Caco-2 (cell line): ENCODE measurements at regions of chr12 and their contacts with region 1.

Region 1: DNA sequence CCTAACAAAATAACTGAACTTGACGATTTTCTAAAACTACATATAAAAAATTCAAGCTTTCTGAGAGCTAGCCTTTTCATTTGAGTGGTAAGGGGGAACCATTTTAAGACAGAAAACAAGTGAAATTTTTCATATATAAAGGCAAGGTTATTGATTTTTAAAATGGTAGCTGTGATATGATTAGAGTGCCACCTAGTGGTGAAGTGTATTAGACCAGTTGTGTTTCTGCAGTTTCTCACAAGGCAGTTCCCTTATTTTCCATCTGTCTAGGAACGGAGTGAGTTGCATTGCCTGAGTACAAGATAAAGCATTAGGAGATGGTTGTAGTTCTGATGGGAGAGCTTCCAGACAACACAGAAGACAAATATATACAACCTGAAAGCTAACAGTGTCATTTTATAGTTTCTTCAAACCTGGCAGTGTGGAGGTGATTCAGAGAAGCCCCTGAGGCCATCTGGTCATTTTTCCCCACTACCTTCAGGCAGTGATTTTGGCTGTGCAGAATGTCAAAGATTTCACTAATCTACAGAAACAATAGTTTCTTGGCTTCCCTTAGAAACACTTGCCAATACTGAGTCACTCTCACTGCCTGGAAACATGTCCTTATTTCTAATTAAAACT is 180.8 kb downstream of the C12orf50 start:
- DNase-seq: peak in 1 of 2 experiments; percentile 52
- H3K4me3 ChIP-seq: no peak overlapping the region
- H3K4me3 Mint-ChIP-seq: no peak overlapping the region
- H3K27ac Mint-ChIP-seq: no peak overlapping the region
- H3K4me1 ChIP-seq: no peaks in the 10 kb centered on the region
- H3K4me1 Mint-ChIP-seq: no peaks in the 10 kb centered on the region
- H3K27me3 ChIP-seq: no peaks in the 10 kb centered on the region
- H3K27me3 Mint-ChIP-seq: peaks cover 5% of the 10 kb centered on the region
- CTCF ChIP-seq: peak; percentile 73 to 74

Region 2: DNA sequence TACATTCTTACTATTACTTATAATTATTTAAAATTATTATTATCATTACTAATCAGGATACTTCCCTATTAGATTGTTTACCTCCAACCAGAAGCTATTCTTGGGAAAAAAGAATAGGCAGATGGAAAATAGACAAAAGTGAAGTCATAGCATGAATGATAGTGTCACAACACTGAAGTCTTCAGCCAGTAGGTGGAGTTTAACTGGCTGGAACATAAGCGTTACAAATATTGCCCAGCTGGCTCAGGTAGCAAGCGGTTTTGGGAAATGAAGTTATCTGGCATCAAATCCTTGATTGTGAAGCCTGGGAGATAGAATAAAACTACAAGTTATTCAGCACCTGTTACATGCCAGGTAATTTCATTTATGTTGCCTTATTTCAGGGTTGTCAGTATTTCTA is 582.1 kb before region 1 on chr12:
- CTCF ChIA-PET with region 1: no interaction called
- POLR2A ChIA-PET with region 1: no interaction called
- intact Hi-C with region 1: loop called (anchors 2 kb)
- DNase-seq: peak in 1 of 2 experiments; percentile 21
- H3K4me3 ChIP-seq: no peak overlapping the region
- H3K4me3 Mint-ChIP-seq: no peak overlapping the region
- H3K27ac Mint-ChIP-seq: no peak overlapping the region
- H3K4me1 ChIP-seq: no peaks in the 10 kb centered on the region
- H3K4me1 Mint-ChIP-seq: no peaks in the 10 kb centered on the region
- H3K27me3 ChIP-seq: no peaks in the 10 kb centered on the region
- H3K27me3 Mint-ChIP-seq: no peaks in the 10 kb centered on the region
- CTCF ChIP-seq: peak; percentile 40 to 53

Region 3: GRCh38 chr12:87274594-87275245 is 573.6 kb before region 1 on chr12:
- CTCF ChIA-PET with region 1: no interaction called
- POLR2A ChIA-PET with region 1: no interaction called
- intact Hi-C with region 1: loop called (anchors 1 kb)
- DNase-seq: peak in 1 of 2 experiments; percentile 27
- H3K4me3 ChIP-seq: no peak overlapping the region
- H3K4me3 Mint-ChIP-seq: no peak overlapping the region
- H3K27ac Mint-ChIP-seq: no peak overlapping the region
- H3K4me1 ChIP-seq: no peaks in the 10 kb centered on the region
- H3K4me1 Mint-ChIP-seq: no peaks in the 10 kb centered on the region
- H3K27me3 ChIP-seq: no peaks in the 10 kb centered on the region
- H3K27me3 Mint-ChIP-seq: no peaks in the 10 kb centered on the region
- CTCF ChIP-seq: peak; percentile 60 to 70

Region 4: GRCh38 chr12:87344699-87345098 is 503.7 kb before region 1 on chr12:
- CTCF ChIA-PET with region 1: no interaction called
- POLR2A ChIA-PET with region 1: no interaction called
- intact Hi-C with region 1: loop called (anchors 5 kb)
- DNase-seq: no peak
- H3K4me3 ChIP-seq: no peak overlapping the region
- H3K4me3 Mint-ChIP-seq: no peak overlapping the region
- H3K27ac Mint-ChIP-seq: no peak overlapping the region
- H3K4me1 ChIP-seq: no peaks in the 10 kb centered on the region
- H3K4me1 Mint-ChIP-seq: no peaks in the 10 kb centered on the region
- H3K27me3 ChIP-seq: no peaks in the 10 kb centered on the region
- H3K27me3 Mint-ChIP-seq: peaks cover 5% of the 10 kb centered on the region
- CTCF ChIP-seq: no peak

Region 5: DNA sequence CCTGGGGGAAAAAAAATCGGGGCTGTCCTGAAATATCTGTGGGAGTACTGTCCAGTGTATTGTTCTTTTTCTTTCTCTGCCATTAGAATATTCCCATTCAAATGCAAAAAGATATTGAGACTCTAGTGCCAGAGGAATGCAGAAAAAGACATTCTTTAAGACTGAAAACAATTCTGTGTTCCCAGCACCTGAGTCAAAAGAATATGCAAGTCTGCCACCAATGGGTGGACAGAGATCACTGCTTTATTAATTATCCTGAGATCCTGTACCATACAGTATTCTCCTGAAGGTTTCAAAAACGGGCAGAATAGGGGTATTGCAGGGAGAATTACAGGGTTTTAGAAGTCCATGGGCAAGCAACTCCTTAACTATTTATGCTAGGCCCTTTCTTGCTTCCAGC is 181.0 kb before region 1 on chr12:
- CTCF ChIA-PET with region 1: no interaction called
- POLR2A ChIA-PET with region 1: no interaction called
- intact Hi-C with region 1: loop called (anchors 5 kb)
- DNase-seq: peak in 1 of 2 experiments; percentile 10
- H3K4me3 ChIP-seq: no peak overlapping the region
- H3K4me3 Mint-ChIP-seq: no peak overlapping the region
- H3K27ac Mint-ChIP-seq: no peak overlapping the region
- H3K4me1 ChIP-seq: no peaks in the 10 kb centered on the region
- H3K4me1 Mint-ChIP-seq: no peaks in the 10 kb centered on the region
- H3K27me3 ChIP-seq: no peaks in the 10 kb centered on the region
- H3K27me3 Mint-ChIP-seq: no peaks in the 10 kb centered on the region
- CTCF ChIP-seq: peak; percentile 26 to 33

Region 6: DNA sequence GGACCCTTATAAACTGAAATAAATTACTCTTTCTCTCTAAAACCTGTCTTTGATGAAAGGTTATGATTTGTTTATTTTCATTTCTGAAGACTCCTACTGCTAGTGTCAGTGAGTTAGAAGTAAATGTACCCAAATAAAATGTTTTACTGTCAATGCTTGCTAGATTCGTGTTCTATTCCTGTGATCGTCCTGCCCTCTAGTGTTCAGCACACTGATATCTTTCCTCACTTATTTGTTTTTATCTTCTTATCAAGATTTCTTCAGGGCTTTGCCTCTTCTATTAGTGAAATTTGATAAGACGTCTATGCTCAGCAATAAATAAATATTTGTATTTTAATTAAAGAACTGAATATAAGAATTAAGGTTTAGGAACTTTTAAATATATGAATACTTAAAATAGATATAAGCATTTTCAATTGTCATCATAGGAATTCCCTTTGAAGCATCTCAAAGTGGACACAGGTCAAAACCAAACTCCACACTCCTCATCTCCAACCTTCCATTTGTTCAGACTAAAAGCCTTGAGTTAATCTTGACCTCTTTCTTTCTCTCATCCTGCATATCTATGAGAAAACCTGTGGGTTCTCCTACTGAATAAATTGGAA is 105.0 kb after region 1 on chr12:
- CTCF ChIA-PET with region 1: interaction called, 4 read pairs
- POLR2A ChIA-PET with region 1: no interaction called
- intact Hi-C with region 1: loop called (anchors 5 kb)
- DNase-seq: peak in 1 of 2 experiments; percentile 9
- H3K4me3 ChIP-seq: no peak overlapping the region
- H3K4me3 Mint-ChIP-seq: no peak overlapping the region
- H3K27ac Mint-ChIP-seq: no peak overlapping the region
- H3K4me1 ChIP-seq: no peaks in the 10 kb centered on the region
- H3K4me1 Mint-ChIP-seq: no peaks in the 10 kb centered on the region
- H3K27me3 ChIP-seq: no peaks in the 10 kb centered on the region
- H3K27me3 Mint-ChIP-seq: no peaks in the 10 kb centered on the region
- CTCF ChIP-seq: peak; percentile 33 to 61